PC-3 (cell line): ENCODE measurements at regions of chr12 and their contacts with region 1.

Region 1: GRCh38 chr12:27024291-27024690 is 1.9 kb downstream of the MED21 start:
- DNase-seq: no peak
- ATAC-seq: no peak
- H3K4me3 ChIP-seq: peak overlapping the region; percentile 79; the same call in 1 of the 2 replicates
- H3K27ac ChIP-seq: no peak overlapping the region
- H3K4me1 ChIP-seq: peaks cover 22% of the 10 kb centered on the region
- H3K27me3 ChIP-seq: no peaks in the 10 kb centered on the region
- CTCF ChIP-seq: no peak

Region 2: DNA sequence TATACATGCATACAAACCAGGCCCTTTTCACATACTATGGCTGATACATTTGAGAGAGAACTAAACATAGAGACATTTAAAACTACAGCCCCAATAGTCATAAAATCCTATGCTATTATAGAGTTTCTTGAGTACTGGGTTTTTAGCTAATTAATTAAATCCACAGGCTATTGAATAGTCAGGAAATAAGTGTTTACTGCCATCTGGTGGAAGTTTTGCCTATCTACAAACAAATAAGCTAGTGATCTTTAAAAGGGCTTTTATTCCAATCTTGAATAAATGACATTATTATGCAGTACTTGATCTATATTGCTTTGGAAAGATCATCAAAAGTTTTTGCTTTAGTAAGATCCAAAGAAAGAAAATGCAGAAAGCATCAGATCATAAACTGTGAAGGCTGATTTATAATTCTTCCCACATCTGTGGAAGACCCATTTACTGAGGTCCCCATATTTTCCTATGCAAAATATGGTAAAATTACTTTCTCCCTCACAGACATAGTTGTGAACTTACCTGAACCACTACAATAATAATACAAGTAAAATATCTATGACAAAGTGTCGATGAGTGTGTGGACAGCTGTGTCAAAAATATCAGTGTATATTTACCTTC is 322.6 kb before region 1 on chr12:
- CTCF ChIA-PET with region 1: no interaction called
- POLR2A ChIA-PET with region 1: no interaction called
- intact Hi-C with region 1: no loop called
- DNase-seq: peak; percentile 80
- ATAC-seq: no peak
- H3K4me3 ChIP-seq: no peak overlapping the region
- H3K27ac ChIP-seq: no peak overlapping the region
- H3K4me1 ChIP-seq: peaks cover 29% of the 10 kb centered on the region
- H3K27me3 ChIP-seq: no peaks in the 10 kb centered on the region
- CTCF ChIP-seq: peak; percentile 95

Region 3: GRCh38 chr12:26979733-26980132 is 44.6 kb before region 1 on chr12:
- CTCF ChIA-PET with region 1: no interaction called
- POLR2A ChIA-PET with region 1: no interaction called
- intact Hi-C with region 1: no loop called
- DNase-seq: no peak
- ATAC-seq: no peak
- H3K4me3 ChIP-seq: no peak overlapping the region
- H3K27ac ChIP-seq: no peak overlapping the region
- H3K4me1 ChIP-seq: no peaks in the 10 kb centered on the region
- H3K27me3 ChIP-seq: no peaks in the 10 kb centered on the region
- CTCF ChIP-seq: no peak

Region 4: DNA sequence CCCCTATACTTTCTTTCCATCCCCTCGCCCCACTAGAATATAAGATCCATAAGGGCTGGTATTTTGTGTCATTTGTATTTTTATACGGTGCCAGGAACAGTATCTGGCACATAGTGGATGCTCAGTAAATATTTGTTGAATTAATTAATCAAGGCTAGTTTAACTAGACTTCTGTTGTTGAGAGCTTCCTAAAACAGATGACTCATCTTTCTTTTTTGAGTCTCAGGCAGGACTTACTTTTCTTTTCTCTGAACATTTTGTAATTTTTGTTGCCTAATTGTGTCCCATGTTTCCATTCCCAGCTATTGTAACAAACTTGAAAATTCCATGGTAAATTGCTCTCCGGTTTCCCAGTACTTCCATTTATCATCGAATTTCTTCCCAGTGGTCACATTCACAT is 236.5 kb after region 1 on chr12:
- CTCF ChIA-PET with region 1: no interaction called
- POLR2A ChIA-PET with region 1: interaction called, 5 read pairs
- intact Hi-C with region 1: loop called (anchors 5 kb)
- DNase-seq: peak; percentile 40
- ATAC-seq: peak; percentile 55
- H3K4me3 ChIP-seq: no peak overlapping the region
- H3K27ac ChIP-seq: peak overlapping the region; percentile 48
- H3K4me1 ChIP-seq: peaks cover 25% of the 10 kb centered on the region
- H3K27me3 ChIP-seq: no peaks in the 10 kb centered on the region
- CTCF ChIP-seq: no peak